CD4-positive, alpha-beta T cell (primary cell): ENCODE measurements at regions of chr5 and their contacts with region 1.

Region 1: DNA sequence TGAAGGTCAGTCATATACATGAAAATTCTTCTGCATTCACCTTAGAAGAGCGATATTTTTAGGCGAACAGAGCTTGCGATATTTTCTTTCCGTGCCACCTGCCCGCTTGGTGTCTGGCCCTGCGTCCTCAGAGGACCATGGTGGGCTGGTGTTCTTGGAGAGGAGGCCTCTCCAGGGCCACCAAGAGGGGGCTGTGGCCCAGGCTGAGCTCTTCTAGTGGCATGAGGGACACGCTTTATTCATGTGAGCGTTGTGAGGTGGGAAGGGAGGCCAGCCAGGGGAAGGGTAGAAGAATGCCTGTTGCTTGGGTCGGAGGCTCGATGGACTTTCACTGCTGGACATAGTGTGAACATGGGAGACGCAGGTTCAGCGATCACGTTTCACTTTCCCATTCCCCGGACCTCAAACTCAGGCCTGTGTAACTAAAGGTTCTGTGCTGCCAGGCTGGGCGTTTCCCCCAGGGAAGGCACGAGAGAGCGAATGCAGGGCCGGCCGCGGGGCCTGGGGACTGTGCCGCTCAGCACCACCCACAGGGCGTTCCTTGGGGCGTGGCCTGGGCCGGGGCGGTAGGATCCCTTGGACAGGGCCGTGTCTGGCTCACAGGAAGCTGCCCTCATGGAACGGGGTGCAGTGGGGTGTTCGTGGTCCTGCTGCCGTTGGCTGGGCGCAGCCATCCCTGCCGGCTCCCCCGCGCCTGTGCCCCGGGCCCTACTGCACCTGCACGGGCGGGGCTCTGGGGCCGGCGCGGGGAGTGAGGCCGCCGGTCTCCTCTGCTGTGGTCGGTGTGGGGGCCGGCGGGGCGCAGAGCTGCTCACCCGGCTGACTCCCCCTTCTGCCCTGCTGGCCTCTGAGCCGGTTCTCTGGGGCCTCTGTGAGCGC is 40.7 kb upstream of the CLPTM1L start:
- DNase-seq: peak; percentile 73 to 96 (median 86)
- ATAC-seq: peak; percentile 75
- H3K4me3 ChIP-seq: peak overlapping the region; percentile 70
- H3K4me3 Mint-ChIP-seq: peak overlapping the region; percentile 99
- H3K27ac ChIP-seq: peak overlapping the region; percentile 93
- H3K27ac Mint-ChIP-seq: peak overlapping the region; percentile 99
- H3K4me1 ChIP-seq: peaks cover 30% of the 10 kb centered on the region
- H3K4me1 Mint-ChIP-seq: peaks cover 34% of the 10 kb centered on the region
- H3K27me3 ChIP-seq: no peaks in the 10 kb centered on the region
- H3K27me3 Mint-ChIP-seq: no peaks in the 10 kb centered on the region
- CTCF ChIP-seq: no peak

Region 2: DNA sequence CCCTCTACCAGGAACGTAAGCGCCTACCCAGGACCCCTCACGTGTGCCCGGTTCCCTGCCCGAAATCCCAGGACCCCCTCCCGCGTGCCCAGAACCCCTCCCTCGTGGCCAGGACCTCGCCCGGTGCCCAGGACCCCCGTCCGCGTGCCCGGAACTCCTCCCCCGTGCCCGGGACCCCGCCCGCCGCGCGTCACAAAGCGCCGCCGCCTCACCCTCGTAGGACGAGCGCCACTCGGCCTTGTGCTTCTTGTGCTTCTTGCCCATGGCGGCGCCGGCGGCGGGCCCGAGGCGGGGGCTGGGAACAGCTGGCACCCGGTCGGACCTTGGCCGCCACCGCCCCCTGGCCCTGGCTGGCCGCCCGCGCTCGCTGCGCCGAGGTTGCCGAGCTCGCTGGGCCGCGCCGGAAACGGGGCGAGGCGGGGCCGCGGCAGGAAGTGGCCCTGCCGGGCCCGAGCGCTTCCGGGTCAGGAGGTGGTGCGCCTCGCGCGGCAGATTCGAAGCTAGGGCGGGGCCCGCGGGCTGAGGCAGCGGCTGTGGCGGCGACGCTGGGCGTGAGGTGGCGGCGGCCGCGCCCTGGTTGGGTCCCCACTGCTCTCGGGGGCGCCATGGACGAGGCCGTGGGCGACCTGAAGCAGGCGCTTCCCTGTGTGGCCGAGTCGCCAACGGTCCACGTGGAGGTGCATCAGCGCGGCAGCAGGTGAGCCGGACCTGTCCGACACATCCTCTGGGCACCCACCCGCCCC is 493.1 kb before region 1 on chr5 and contains the starts of genes BRD9 and TRIP13:
- CTCF ChIA-PET with region 1: no interaction called
- POLR2A ChIA-PET with region 1: interaction called, 3 read pairs
- intact Hi-C with region 1: loop called in 1 of 2 experiments (anchors 10 kb)
- DNase-seq: peak; percentile 69 to 93 (median 80)
- ATAC-seq: peak; percentile 95
- H3K4me3 ChIP-seq: peak within 1 kb of the TSS; percentile 95
- H3K4me3 Mint-ChIP-seq: peak within 1 kb of the TSS; percentile 92
- H3K27ac ChIP-seq: peak within 1 kb of the TSS; percentile 48 to 67
- H3K27ac Mint-ChIP-seq: peak within 1 kb of the TSS; percentile 90
- H3K4me1 ChIP-seq: peaks cover 30% of the 10 kb centered on the region
- H3K4me1 Mint-ChIP-seq: peaks cover 25% of the 10 kb centered on the region
- H3K27me3 ChIP-seq: no peaks in the 10 kb centered on the region
- H3K27me3 Mint-ChIP-seq: no peaks in the 10 kb centered on the region
- CTCF ChIP-seq: no peak
- total RNA-seq, gene BRD9: 109 TPM
- total RNA-seq, gene TRIP13: 0.47 to 0.66 TPM

Region 3: DNA sequence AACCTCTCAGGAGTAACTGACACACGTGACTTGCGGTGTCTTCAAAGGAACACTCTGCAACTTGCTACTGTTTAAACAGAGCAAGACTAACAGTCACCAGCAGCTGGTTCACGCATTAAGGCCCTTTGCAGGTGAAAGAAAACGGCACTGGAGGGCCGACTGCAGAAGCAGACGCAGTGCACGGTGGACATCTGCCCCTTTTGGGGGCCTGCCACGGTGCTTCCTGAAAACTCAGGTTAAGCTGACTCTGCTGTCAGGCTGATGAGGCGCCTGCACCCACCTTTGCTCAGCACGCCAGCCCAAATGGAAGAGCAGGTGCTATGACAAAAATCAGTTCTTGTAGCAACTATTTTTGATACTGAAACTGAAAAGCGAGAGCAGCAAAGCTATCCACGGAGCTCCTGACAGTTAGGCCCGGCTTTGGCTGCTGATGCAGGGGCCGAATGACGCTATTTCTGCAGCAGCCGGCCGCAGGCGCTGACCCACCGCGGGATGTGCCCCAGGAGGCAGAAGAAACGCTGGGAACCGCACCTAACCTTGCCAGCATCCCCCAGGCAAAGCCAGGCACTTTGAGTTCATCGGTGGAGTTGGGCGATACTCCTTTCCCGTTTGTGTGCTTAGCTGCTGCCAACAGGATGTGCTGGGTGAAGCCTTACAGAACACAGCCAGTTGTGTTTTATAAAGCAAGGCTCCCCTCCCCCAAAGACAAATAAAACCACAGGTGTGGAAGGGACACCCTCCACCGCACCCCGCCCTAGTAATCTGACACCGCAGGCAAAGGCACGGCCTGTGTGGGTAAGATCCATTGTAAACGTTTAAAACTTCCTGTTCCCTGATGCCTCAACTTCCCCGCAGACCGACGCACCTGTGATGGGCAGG is 69.7 kb before region 1 on chr5:
- CTCF ChIA-PET with region 1: no interaction called
- POLR2A ChIA-PET with region 1: interaction called, 24 read pairs
- intact Hi-C with region 1: no loop called
- DNase-seq: peak; percentile 34 to 89 (median 58)
- ATAC-seq: peak; percentile 66
- H3K4me3 ChIP-seq: peak overlapping the region; percentile 58
- H3K4me3 Mint-ChIP-seq: peak overlapping the region; percentile 81
- H3K27ac ChIP-seq: peak overlapping the region; percentile 57 to 67
- H3K27ac Mint-ChIP-seq: peak overlapping the region; percentile 95
- H3K4me1 ChIP-seq: peaks cover 62% of the 10 kb centered on the region
- H3K4me1 Mint-ChIP-seq: peaks cover 66% of the 10 kb centered on the region
- H3K27me3 ChIP-seq: no peaks in the 10 kb centered on the region
- H3K27me3 Mint-ChIP-seq: no peaks in the 10 kb centered on the region
- CTCF ChIP-seq: no peak

Region 4: GRCh38 chr5:1536322-1536845 is 150.8 kb after region 1 on chr5:
- CTCF ChIA-PET with region 1: no interaction called
- POLR2A ChIA-PET with region 1: interaction called, 16 read pairs
- intact Hi-C with region 1: no loop called
- DNase-seq: peak; percentile 53 to 91 (median 65)
- ATAC-seq: peak; percentile 96
- H3K4me3 ChIP-seq: peak overlapping the region; percentile 39
- H3K4me3 Mint-ChIP-seq: peak overlapping the region; percentile 72
- H3K27ac ChIP-seq: peak overlapping the region; percentile 63 to 81
- H3K27ac Mint-ChIP-seq: peak overlapping the region; percentile 89
- H3K4me1 ChIP-seq: peaks cover 10% of the 10 kb centered on the region
- H3K4me1 Mint-ChIP-seq: peaks cover 23% of the 10 kb centered on the region
- H3K27me3 ChIP-seq: no peaks in the 10 kb centered on the region
- H3K27me3 Mint-ChIP-seq: no peaks in the 10 kb centered on the region
- CTCF ChIP-seq: no peak

Region 5: GRCh38 chr5:1659100-1659981 is 273.7 kb after region 1 on chr5:
- CTCF ChIA-PET with region 1: no interaction called
- POLR2A ChIA-PET with region 1: no interaction called
- intact Hi-C with region 1: no loop called
- DNase-seq: no peak
- ATAC-seq: no peak
- H3K4me3 ChIP-seq: no peak overlapping the region
- H3K4me3 Mint-ChIP-seq: no peak overlapping the region
- H3K27ac ChIP-seq: no peak overlapping the region
- H3K27ac Mint-ChIP-seq: no peak overlapping the region
- H3K4me1 ChIP-seq: peaks cover under 1% of the 10 kb centered on the region
- H3K4me1 Mint-ChIP-seq: no peaks in the 10 kb centered on the region
- H3K27me3 ChIP-seq: peaks cover 27 to 37% of the 10 kb centered on the region in 2 experiments
- H3K27me3 Mint-ChIP-seq: peaks cover 62% of the 10 kb centered on the region
- CTCF ChIP-seq: no peak

Region 6: GRCh38 chr5:1751016-1751878 is 365.6 kb after region 1 on chr5:
- CTCF ChIA-PET with region 1: no interaction called
- POLR2A ChIA-PET with region 1: no interaction called
- intact Hi-C with region 1: no loop called
- DNase-seq: peak in 1 of 14 experiments; percentile 7
- ATAC-seq: no peak
- H3K4me3 ChIP-seq: no peak overlapping the region
- H3K4me3 Mint-ChIP-seq: no peak overlapping the region
- H3K27ac ChIP-seq: no peak overlapping the region
- H3K27ac Mint-ChIP-seq: no peak overlapping the region
- H3K4me1 ChIP-seq: no peaks in the 10 kb centered on the region
- H3K4me1 Mint-ChIP-seq: no peaks in the 10 kb centered on the region
- H3K27me3 ChIP-seq: peaks cover 0 to 5% of the 10 kb centered on the region in 2 experiments
- H3K27me3 Mint-ChIP-seq: peaks cover 4% of the 10 kb centered on the region
- CTCF ChIP-seq: no peak

Region 7: DNA sequence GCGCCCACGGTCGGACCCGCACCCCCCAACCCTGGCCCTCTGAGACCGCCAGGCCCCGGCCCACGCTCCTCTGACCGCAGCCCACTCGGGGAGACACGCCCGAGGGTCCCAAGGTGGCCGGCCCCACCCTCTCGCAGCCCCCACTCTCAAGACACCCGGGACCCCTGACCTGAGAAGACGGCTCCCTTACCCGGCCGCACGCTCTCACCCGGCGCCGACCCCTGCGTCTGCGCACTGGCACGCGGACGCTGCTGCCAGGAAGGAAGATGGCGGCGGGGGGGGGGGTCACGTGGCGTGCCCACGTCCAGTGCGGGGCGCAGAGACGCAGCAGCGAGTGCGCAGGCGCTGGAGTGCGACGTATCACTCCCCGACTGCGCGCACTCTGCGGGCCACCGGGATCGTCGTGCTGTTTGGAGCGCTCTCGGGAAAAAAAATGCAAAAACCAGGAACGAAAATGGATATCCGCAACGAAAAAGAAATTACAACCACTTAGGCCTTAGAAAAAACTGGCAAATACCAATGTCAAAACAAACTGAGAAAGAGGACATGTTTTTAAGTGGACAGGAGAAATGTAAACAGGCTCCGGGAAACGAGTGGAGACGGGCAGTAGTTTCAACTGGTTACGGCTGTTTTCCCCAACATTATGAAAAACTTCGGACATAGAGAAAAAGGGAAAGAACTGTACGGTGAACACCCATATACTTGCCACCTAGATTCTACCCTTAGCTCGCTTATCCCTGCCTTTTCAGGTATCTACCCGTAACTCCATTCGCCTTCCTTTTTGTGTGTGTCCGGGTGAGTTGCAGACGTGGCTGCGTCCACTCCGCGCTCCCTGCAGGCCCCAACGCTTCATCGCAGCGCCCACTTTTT is 414.2 kb after region 1 on chr5 and contains the start of gene MRPL36:
- CTCF ChIA-PET with region 1: no interaction called
- POLR2A ChIA-PET with region 1: no interaction called
- intact Hi-C with region 1: loop called in 1 of 2 experiments (anchors 5 kb)
- DNase-seq: peak; percentile 89 to 97 (median 92)
- ATAC-seq: peak; percentile 73
- H3K4me3 ChIP-seq: peak within 1 kb of the TSS; percentile 82
- H3K4me3 Mint-ChIP-seq: peak within 1 kb of the TSS; percentile 100
- H3K27ac ChIP-seq: peak within 1 kb of the TSS; percentile 74 to 89
- H3K27ac Mint-ChIP-seq: peak within 1 kb of the TSS; percentile 99
- H3K4me1 ChIP-seq: peaks cover 51% of the 10 kb centered on the region
- H3K4me1 Mint-ChIP-seq: peaks cover 65% of the 10 kb centered on the region
- H3K27me3 ChIP-seq: no peaks in the 10 kb centered on the region
- H3K27me3 Mint-ChIP-seq: no peaks in the 10 kb centered on the region
- CTCF ChIP-seq: no peak
- total RNA-seq, gene MRPL36: 14.3 to 18.2 TPM